Motor neuron (in vitro differentiated cells): ENCODE measurements at regions of chr6 and their contacts with region 1.

Region 1: DNA sequence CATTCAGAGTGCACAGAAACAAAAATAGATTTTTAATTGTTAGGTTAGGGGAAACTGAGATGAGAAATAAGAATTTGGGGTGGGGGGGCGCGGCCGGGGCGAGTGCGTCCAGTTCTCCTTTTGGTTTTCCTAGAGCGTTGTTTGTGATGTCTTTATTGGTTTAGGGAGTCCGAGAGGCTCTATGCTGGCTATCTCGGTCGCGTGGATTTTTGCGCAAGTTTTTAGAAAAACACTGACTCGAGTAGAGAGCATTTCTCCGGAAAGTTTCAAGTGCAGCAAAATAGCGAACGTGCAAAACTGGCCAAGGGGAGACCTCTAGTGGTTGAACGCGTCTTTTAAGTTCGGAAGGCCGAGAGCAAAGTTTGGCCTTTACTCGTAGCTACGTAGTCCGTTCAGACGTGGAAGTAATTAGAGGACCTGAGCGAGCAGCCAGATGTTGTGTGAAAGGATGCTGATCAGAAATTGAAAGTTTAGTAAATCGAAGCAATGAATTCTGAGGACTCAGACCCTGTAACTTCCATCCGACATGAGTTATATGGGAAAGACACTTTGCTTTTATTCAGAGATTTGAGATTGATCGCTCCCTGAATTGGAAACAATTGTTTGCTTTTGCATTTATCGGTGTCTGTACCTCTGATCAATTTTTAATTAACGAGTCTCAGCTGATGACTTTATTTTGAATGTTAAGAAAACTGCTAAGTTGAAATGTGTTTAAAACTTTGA is 2.7 kb downstream of the L3MBTL3 start:
- ATAC-seq: peak; percentile 23 to 63 (median 34)
- H3K4me3 ChIP-seq: peak overlapping the region; percentile 57 to 99 (median 88)
- H3K27ac ChIP-seq: no peak overlapping the region
- H3K4me1 ChIP-seq: no peaks in the 10 kb centered on the region

Region 2: DNA sequence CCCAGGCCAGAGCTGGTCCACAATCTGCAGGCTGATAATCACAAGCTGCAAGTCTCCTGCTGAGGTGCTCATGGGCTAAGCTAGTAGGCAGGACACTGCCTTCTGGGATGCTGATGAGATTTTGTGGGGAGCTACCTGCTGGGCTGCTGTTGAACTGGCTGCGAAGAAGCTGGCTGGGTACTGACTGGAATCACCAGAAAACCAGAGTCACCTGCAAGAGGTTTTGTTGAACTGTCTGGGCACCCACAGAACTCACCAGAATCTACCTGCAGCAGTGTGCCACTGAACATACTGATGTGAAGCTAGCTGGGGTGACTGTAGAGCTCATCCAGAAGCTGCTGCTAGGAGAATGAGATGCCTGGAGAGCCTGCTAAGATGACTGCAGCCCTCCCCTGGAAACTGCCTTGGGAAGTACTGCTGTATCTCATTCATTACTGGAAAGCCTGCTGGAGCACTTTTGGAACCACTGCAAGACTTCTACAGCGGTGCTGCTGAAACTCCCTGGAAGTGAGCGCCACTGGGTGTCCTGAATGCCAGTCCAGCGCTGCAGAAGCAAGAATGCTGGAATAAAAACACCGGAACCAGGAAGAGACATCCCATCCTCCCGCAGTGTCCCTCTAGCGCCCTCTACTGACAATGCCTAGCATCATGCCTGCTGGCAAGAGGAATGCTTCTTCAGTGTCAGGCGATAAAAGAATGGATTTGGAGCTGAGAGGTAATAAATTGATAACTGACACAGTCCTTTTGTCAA is 246.2 kb before region 1 on chr6:
- in situ Hi-C with region 1: loop called in 1 of 9 experiments (anchors 25 kb)
- ATAC-seq: peak; percentile 72 to 99 (median 94)
- H3K4me3 ChIP-seq: no peak overlapping the region
- H3K27ac ChIP-seq: no peak overlapping the region
- H3K4me1 ChIP-seq: no peaks in the 10 kb centered on the region

Region 3: DNA sequence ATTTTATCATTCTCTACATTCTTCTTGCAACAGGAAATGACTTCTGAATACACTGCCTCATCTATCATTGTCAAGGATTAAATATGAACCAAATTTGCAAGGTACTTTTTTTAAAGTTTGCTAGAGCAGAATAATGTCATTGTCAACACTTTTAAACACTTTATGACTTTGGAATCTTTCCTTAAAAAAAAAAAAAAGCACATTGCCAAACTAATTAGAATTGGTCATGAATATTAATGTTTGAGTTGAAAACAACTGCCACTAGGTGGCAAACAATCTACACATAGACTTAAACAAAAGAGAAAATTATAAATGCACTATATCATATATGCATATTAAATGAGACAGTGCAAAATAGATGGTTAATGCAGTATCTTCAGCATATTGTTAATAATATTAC is 127.4 kb before region 1 on chr6:
- in situ Hi-C with region 1: loop called in 1 of 9 experiments (anchors 25 kb)
- ATAC-seq: no peak
- H3K4me3 ChIP-seq: no peak overlapping the region
- H3K27ac ChIP-seq: no peak overlapping the region
- H3K4me1 ChIP-seq: no peaks in the 10 kb centered on the region